Right ventricle myocardium inferior (tissue), 1 donor: ENCODE measurements at regions of chr1 and their contacts with region 1.

Region 1: GRCh38 chr1:163174524-163175437 is 27.9 kb downstream of the RGS5 start:
- DNase-seq: peak; percentile 83
- ATAC-seq: peak; percentile 71

Region 2: DNA sequence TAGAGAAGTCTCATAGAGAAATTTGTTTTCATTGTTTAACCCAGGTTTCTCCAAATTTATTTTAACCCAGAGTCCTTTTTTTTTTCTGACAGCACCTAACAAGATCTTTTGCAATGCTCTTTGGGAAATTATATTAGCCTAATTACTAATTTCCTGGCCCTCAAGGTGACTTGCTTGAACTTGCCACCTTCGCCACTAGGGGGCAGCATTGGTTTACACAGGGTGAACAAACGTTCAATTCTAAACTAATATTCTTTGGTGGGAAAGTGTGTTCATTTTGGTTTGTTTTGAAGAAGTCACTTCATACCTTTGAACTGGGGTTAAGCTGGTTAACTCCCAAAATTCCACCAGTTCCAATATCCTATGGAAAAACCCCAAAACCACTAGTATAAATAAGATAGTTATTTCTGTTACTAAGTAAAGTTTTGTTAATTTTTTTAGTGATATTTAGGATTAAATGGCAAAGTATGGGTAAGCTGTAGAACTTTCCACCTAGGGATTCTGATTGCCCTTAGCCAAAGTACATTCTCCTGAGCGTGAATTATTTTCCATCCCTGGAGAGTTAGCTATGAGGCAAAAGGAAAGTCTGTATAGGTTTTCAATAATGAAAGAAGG is 326.8 kb before region 1 on chr1:
- intact Hi-C with region 1: loop called (anchors 5 kb)
- DNase-seq: peak; percentile 81
- ATAC-seq: no peak

Region 3: GRCh38 chr1:162878000-162878596 is 296.7 kb before region 1 on chr1:
- intact Hi-C with region 1: loop called (anchors 1 kb)
- DNase-seq: no peak
- ATAC-seq: peak; percentile 59

Region 4: GRCh38 chr1:163202833-163203451 is 28.2 kb after region 1 on chr1 and contains the start of gene RGS5:
- intact Hi-C with region 1: no loop called
- DNase-seq: no peak
- ATAC-seq: peak; percentile 42
- total RNA-seq, gene RGS5: 246 TPM